Activated CD4-positive, alpha-beta T cell treated with anti-CD3 and anti-CD28 coated beads for 36 hours (primary cell): ENCODE measurements at regions of chr14 and their contacts with region 1.

Region 1: GRCh38 chr14:96796851-96797581 is at the start of gene VRK1:
- DNase-seq: peak; percentile 96
- ATAC-seq: peak; percentile 98
- H3K4me3 Mint-ChIP-seq: peak within 1 kb of the TSS; percentile 92
- H3K27ac Mint-ChIP-seq: peak within 1 kb of the TSS; percentile 88
- H3K4me1 Mint-ChIP-seq: peaks cover 24% of the 10 kb centered on the region
- H3K27me3 Mint-ChIP-seq: peaks cover 6% of the 10 kb centered on the region
- total RNA-seq, gene VRK1: 63.1 to 83.3 TPM

Region 2: DNA sequence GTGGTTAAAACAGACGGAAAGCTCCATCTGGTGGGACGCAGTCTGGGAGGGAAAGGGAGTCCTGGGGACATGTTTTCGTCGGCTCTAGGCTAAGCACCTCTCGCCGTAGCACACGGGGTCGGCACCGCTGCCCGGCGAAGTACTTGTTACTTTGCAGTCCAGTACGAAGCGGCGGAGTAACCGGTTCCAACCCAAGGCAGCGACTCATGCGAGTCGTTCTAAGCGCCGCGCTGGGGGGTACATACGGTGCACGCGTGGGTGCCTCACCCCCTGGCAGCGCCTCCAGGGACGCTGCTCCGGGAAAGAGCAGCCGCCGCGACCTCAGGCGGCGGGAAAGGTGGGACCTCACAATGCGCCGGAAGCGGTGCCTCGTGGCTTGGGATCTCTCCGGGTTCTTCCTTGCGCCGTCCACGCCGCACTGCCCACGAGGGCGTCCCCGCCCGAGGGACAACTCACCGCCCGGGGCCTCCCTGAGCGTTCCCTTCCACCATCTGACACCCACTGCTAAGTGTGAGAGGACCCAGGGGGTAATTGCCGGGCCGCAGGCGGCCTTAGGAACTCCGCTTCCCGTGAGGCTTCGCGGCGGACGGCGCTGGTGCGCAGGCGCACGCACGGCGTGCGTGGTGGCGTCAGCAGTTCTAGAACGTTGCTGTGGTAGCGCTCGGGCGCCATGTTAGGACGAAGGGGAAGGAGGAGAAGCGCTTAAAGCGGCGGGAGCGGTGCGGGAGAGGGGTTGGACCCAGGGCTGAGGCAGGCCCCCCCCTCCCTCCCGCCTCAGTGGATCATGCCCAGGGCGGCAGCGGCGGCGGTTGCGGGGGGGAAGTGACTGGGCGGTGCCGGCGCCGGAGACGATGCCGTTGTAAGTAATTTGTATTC is 295.0 kb before region 1 on chr14 and contains the start of gene PAPOLA:
- CTCF ChIA-PET with region 1: no interaction called
- POLR2A ChIA-PET with region 1: no interaction called
- intact Hi-C with region 1: loop called in 1 of 2 experiments (anchors 1 kb)
- DNase-seq: peak; percentile 96
- ATAC-seq: peak; percentile 95
- H3K4me3 Mint-ChIP-seq: peak within 1 kb of the TSS; percentile 99
- H3K27ac Mint-ChIP-seq: peak within 1 kb of the TSS; percentile 98
- H3K4me1 Mint-ChIP-seq: peaks cover 31% of the 10 kb centered on the region
- H3K27me3 Mint-ChIP-seq: peaks cover 6% of the 10 kb centered on the region
- total RNA-seq, gene PAPOLA: 190 to 205 TPM

Region 3: GRCh38 chr14:96762650-96763049 is 34.4 kb before region 1 on chr14:
- CTCF ChIA-PET with region 1: no interaction called
- POLR2A ChIA-PET with region 1: no interaction called
- intact Hi-C with region 1: loop called (anchors 1 kb)
- DNase-seq: peak; percentile 13
- ATAC-seq: peak; percentile 96
- H3K4me3 Mint-ChIP-seq: peak overlapping the region; percentile 43
- H3K27ac Mint-ChIP-seq: no peak overlapping the region
- H3K4me1 Mint-ChIP-seq: peaks cover 3% of the 10 kb centered on the region
- H3K27me3 Mint-ChIP-seq: peaks cover 9% of the 10 kb centered on the region

Region 4: GRCh38 chr14:96776791-96777190 is 20.2 kb before region 1 on chr14:
- CTCF ChIA-PET with region 1: no interaction called
- POLR2A ChIA-PET with region 1: no interaction called
- intact Hi-C with region 1: no loop called
- DNase-seq: no peak
- ATAC-seq: no peak
- H3K4me3 Mint-ChIP-seq: no peak overlapping the region
- H3K27ac Mint-ChIP-seq: no peak overlapping the region
- H3K4me1 Mint-ChIP-seq: no peaks in the 10 kb centered on the region
- H3K27me3 Mint-ChIP-seq: peaks cover 8% of the 10 kb centered on the region

Region 5: GRCh38 chr14:96852823-96853422 is 55.9 kb after region 1 on chr14:
- CTCF ChIA-PET with region 1: interaction called, 7 read pairs
- POLR2A ChIA-PET with region 1: interaction called, 3 read pairs
- intact Hi-C with region 1: loop called (anchors 2 kb)
- DNase-seq: no peak
- ATAC-seq: peak; percentile 38
- H3K4me3 Mint-ChIP-seq: no peak overlapping the region
- H3K27ac Mint-ChIP-seq: no peak overlapping the region
- H3K4me1 Mint-ChIP-seq: peaks cover 22% of the 10 kb centered on the region
- H3K27me3 Mint-ChIP-seq: no peaks in the 10 kb centered on the region